ENCODE measurements at regions of chr1 and their contacts with region 1.

Region 1: GRCh38 chr1:53431805-53432565 is 27.2 kb upstream of the DMRTB1 start:
- DNase-seq: no peak
- ATAC-seq: no peak
- H3K4me3 Mint-ChIP-seq: no peak overlapping the region
- H3K27ac Mint-ChIP-seq: no peak overlapping the region
- H3K4me1 Mint-ChIP-seq: no peaks in the 10 kb centered on the region
- H3K27me3 Mint-ChIP-seq: peaks cover 18% of the 10 kb centered on the region
- CTCF ChIP-seq: no peak

Region 2: GRCh38 chr1:53165408-53165961 is 266.5 kb before region 1 on chr1:
- CTCF ChIA-PET with region 1: no interaction called
- POLR2A ChIA-PET with region 1: no interaction called
- intact Hi-C with region 1: no loop called
- DNase-seq: no peak
- ATAC-seq: no peak
- H3K4me3 Mint-ChIP-seq: no peak overlapping the region
- H3K27ac Mint-ChIP-seq: no peak overlapping the region
- H3K4me1 Mint-ChIP-seq: no peaks in the 10 kb centered on the region
- H3K27me3 Mint-ChIP-seq: peaks cover 17% of the 10 kb centered on the region
- CTCF ChIP-seq: no peak

Region 3: GRCh38 chr1:53420341-53420740 is 11.6 kb before region 1 on chr1:
- CTCF ChIA-PET with region 1: no interaction called
- POLR2A ChIA-PET with region 1: no interaction called
- intact Hi-C with region 1: loop called (anchors 1 kb)
- DNase-seq: no peak
- ATAC-seq: no peak
- H3K4me3 Mint-ChIP-seq: no peak overlapping the region
- H3K27ac Mint-ChIP-seq: no peak overlapping the region
- H3K4me1 Mint-ChIP-seq: no peaks in the 10 kb centered on the region
- H3K27me3 Mint-ChIP-seq: peaks cover 24% of the 10 kb centered on the region
- CTCF ChIP-seq: no peak

Region 4: GRCh38 chr1:53450225-53450624 is 18.2 kb after region 1 on chr1:
- CTCF ChIA-PET with region 1: no interaction called
- POLR2A ChIA-PET with region 1: no interaction called
- intact Hi-C with region 1: no loop called
- DNase-seq: no peak
- ATAC-seq: no peak
- H3K4me3 Mint-ChIP-seq: no peak overlapping the region
- H3K27ac Mint-ChIP-seq: no peak overlapping the region
- H3K4me1 Mint-ChIP-seq: no peaks in the 10 kb centered on the region
- H3K27me3 Mint-ChIP-seq: peaks cover 18% of the 10 kb centered on the region
- CTCF ChIP-seq: no peak

Measured in activated B cell treated with CpG ODN at 0.5 μM for 24 hours (primary cell).